Mucosa of descending colon (tissue), 3 donors: ENCODE measurements at regions of chr17 and their contacts with region 1.

Region 1: DNA sequence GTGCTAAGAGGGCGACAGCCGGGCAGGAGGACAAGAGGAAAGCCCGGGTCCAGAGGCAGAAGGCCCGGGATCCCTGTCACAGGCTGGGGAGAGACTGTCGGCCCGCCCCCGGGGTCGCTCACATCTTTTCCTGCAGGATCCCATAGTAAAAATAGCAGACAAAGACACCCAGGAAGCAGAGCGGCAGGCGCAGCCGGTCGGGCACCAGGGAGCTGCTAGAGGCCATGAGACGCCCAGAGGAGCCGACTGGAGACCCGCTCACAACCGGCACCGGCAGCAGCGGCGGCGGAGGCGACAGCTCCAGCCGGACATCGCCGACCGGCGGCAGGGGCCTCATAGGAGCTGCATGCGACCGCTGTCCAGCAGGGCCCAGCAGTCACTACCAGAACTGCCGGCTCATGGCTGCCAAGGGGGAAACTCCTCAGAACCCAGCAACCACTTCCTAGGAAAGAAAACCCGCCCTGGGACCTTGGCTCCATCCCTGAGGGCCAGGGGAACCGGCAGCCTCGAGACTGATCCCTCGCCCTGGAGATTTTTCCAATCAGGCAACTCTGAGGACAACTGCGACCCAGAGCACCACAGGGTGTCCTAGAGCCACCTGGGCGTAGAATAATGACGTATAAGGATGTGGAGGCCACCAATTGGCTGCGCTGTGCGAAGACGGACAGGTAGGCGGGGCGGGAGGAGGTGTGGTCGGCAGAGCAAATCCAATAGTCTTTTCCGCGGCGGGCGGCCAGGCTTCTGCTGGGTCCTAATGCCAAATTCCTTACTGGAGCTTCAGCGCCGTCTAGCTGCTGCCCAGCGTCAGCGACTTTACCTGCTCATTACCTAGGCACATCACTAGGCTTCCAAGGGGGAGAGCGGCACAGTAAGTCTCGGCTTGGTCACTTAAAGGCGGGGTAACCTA is at the start of gene SLC35B1:
- DNase-seq: peak; percentile 99 to 100 (median 99)
- ATAC-seq: peak; percentile 99
- H3K4me3 ChIP-seq: peak within 1 kb of the TSS; percentile 84
- H3K4me1 ChIP-seq: peaks cover 19% of the 10 kb centered on the region
- CTCF ChIP-seq: peak; percentile 85
- total RNA-seq, gene SLC35B1: 31.7 to 60.3 (median 41.5) TPM

Region 2: GRCh38 chr17:49603720-49604119 is 104.1 kb before region 1 on chr17:
- intact Hi-C with region 1: no loop called
- DNase-seq: no peak
- ATAC-seq: no peak
- H3K4me3 ChIP-seq: no peak overlapping the region
- H3K4me1 ChIP-seq: no peaks in the 10 kb centered on the region
- CTCF ChIP-seq: no peak

Region 3: GRCh38 chr17:49779739-49780231 is 71.9 kb after region 1 on chr17:
- intact Hi-C with region 1: loop called in 1 of 2 experiments (anchors 10 kb)
- DNase-seq: peak in 1 of 3 donors; percentile 66
- ATAC-seq: peak; percentile 67
- H3K4me3 ChIP-seq: no peak overlapping the region
- H3K4me1 ChIP-seq: no peaks in the 10 kb centered on the region
- CTCF ChIP-seq: no peak

Region 4: DNA sequence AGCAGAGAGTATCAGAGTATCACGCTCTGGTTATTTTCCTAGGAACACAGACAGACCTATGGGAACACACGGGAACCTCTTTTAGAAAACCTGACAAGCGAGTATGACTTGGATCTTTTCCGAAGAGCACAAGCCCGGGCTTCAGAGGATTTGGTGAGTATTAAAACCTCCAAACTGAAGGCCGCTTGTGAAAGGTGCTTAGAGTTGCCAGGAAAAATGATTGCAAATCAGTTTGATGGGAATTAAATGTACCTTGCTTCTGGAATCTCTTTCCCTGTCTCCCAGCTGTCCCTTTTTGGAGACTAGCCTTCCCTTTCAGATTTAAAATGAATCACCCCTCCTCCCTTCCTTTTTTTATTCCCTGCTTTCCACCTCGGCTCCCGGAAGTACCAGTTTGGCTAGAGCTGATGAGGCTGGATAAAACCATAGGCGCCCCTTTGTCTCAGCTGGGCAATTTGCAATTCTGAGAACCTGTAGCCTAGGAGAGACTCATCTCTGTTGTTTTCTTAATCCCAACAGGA is 108.0 kb after region 1 on chr17:
- intact Hi-C with region 1: no loop called
- DNase-seq: no peak
- ATAC-seq: no peak
- H3K4me3 ChIP-seq: no peak overlapping the region
- H3K4me1 ChIP-seq: no peaks in the 10 kb centered on the region
- CTCF ChIP-seq: no peak

Region 5: DNA sequence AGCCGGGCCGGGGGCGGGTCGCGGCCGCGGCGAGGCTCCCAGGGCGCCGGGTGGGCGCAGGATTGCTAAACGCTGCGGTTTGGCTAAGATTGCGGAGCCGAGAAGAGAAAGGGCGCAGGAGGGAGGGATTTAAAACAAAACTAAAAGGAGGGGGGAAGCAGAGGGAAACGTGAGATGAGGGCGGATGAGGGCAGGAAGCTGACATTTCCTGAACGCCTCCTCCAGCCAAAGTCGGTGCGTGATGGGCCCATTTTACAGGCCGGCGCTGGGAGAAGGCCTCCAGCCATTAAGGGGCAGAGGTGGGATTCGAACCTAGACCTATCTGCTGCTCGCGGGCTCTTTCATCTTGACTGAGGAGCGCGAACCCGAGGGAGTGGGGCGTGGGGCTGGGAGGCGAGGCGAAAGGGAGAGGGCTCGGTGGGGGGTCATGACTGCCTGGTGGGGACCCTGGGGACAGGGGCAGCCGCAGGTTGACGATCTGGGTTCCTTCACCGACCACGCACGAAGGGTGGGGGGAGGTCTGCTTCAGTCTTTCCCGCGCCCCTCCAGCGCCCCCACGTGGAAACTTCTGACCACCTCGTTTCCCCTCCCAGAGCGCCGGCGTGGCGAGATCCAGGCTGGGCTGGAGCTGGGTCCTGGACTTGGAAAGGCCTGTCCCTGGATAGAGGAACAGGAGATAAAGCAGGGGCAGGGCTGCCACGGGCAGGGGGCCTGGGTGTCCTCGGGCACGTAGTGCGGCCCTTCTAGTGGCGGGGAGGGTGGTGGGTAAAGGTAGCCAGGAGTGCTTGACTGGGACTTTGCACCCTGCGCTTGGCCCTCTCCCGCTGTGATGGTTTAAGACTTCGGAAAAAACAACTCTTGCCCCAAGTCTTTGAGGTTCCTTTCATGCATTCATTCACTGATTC is 143.8 kb after region 1 on chr17:
- intact Hi-C with region 1: loop called in 1 of 2 experiments (anchors 10 kb)
- DNase-seq: peak; percentile 67 to 74 (median 72)
- ATAC-seq: peak; percentile 72
- H3K4me3 ChIP-seq: peak overlapping the region; percentile 17
- H3K4me1 ChIP-seq: peaks cover 3% of the 10 kb centered on the region
- CTCF ChIP-seq: no peak